ENCODE measurements at regions of chr16 and their contacts with region 1.

Region 1: DNA sequence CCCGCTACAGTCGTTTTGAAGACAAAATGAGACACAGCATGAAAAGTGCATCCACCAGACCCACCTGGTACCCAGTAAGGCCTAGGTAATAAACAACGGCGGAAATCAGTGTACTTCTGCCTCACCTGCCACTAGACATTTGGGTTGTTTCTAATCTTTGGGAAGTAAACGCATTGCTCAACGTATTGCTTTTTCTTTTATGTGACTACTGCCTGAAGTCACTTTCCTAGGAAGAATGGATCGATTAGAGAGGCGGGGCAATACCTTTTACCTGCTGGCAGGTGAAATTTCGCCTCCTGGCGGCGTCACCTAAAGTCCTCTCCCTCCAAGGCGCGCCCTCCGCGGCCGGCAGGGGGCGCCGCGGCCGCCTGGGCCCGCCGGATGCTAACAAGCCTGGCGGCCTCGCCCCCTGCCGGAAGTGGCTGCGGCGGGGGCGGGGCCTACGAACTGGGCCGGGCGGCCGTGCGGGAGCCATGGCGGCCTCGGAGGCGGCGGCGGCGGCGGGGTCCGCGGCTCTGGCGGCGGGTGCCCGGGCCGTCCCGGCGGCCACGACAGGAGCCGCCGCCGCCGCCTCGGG is at the start of gene ATMIN:
- DNase-seq: peak; percentile 92
- ATAC-seq: peak; percentile 95
- H3K4me3 ChIP-seq: peak within 1 kb of the TSS; percentile 66 to 73
- H3K27ac ChIP-seq: peak within 1 kb of the TSS; percentile 79
- H3K4me1 ChIP-seq: peaks cover 10 to 14% of the 10 kb centered on the region in 2 experiments; a peak in 3 of 4 replicates
- H3K27me3 ChIP-seq: no peaks in the 10 kb centered on the region
- CTCF ChIP-seq: peak; percentile 99 to 100 (median 100)
- POLR2A ChIP-seq: peak; percentile 54
- RAD21 ChIP-seq: peak; percentile 91
- total RNA-seq, gene ATMIN: 46.7 TPM

Region 2: DNA sequence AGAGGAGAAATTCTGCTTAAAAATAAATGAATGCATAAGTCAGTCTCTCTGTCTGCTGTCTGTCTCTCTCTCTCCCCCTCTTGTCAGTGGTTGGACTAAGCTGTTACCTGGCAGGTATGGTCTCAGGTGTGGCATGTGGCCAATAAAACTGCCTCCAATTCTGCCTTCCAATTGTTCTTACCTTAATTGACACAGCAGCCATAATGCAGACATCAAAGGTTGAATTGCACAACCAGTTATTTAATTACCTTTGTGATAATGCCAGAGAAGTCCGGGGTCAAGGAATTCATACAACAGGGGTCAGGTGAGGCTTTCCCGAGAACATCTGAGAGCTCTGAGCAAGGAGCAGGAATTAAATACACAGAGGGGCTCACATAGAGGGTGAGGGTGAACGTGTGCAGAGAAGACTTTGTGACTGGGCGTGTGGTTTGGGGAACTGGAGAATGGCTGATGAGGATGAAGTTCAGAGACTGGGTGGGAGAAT is 152.3 kb before region 1 on chr16:
- CTCF ChIA-PET with region 1: no interaction called
- POLR2A ChIA-PET with region 1: no interaction called
- RAD21 ChIA-PET with region 1: no interaction called
- intact Hi-C with region 1: no loop called
- DNase-seq: no peak
- ATAC-seq: no peak
- H3K4me3 ChIP-seq: no peak overlapping the region
- H3K27ac ChIP-seq: no peak overlapping the region
- H3K4me1 ChIP-seq: no peaks in the 10 kb centered on the region
- H3K27me3 ChIP-seq: peaks cover 18% of the 10 kb centered on the region
- CTCF ChIP-seq: no peak
- POLR2A ChIP-seq: no peak
- RAD21 ChIP-seq: no peak

Region 3: DNA sequence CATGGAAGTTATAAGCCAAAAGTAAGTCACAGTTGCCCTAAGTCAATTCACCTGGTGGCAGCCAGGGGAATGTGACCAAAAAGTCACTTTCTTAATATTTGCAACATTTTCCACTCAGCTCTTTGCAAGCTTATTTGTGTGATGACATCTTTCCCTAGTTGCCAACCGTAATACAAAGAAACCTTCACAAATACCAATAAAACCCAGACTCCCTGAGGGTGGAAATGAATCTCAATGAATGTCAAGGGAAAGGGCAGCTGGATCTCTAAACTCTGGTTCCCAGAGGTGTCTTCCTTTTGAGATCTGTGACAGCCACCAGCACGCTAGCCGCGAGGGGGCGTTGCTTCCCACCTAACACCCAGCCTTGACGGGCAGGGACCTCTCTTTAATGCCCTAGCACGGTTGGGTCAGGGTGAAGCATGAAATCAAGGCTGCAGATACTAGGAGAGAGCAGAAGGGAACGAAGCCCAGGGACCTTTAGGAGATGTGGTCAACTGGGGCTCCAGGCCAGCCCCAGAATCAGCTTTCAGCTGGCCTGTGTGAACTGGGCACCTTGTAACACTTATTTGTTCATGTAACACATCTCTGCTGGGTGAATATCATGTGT is 111.0 kb before region 1 on chr16:
- CTCF ChIA-PET with region 1: interaction called, 12 read pairs
- POLR2A ChIA-PET with region 1: no interaction called
- RAD21 ChIA-PET with region 1: no interaction called
- intact Hi-C with region 1: loop called (anchors 1 kb)
- DNase-seq: peak; percentile 58
- ATAC-seq: peak; percentile 98
- H3K4me3 ChIP-seq: no peak overlapping the region
- H3K27ac ChIP-seq: no peak overlapping the region
- H3K4me1 ChIP-seq: no peaks in the 10 kb centered on the region
- H3K27me3 ChIP-seq: peaks cover 6% of the 10 kb centered on the region; the same call in 1 of the 2 replicates
- CTCF ChIP-seq: peak; percentile 96 to 97 (median 97)
- POLR2A ChIP-seq: no peak
- RAD21 ChIP-seq: peak; percentile 87

Region 4: DNA sequence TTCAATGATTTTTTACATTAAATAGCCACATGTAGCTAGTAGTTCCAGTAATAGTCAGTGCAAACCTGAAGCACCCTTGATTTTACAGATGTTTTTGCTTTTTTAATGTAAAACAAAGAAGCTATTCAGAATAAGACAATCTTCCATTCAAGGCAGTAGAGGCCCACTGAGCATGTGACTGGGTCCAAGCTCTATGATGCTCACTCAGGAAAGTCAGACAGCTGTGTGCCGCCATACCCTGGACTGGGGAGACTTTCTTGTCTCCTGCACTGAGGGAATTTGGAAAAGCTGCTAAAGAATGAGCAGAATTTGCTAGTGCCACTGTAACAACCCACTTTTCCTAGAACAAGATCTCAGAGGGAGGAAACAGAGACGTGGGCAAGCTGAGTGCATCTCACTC is 17.0 kb before region 1 on chr16:
- CTCF ChIA-PET with region 1: interaction called, 26 read pairs
- POLR2A ChIA-PET with region 1: no interaction called
- RAD21 ChIA-PET with region 1: no interaction called
- intact Hi-C with region 1: no loop called
- DNase-seq: no peak
- ATAC-seq: no peak
- H3K4me3 ChIP-seq: no peak overlapping the region
- H3K27ac ChIP-seq: no peak overlapping the region
- H3K4me1 ChIP-seq: no peaks in the 10 kb centered on the region
- H3K27me3 ChIP-seq: no peaks in the 10 kb centered on the region
- CTCF ChIP-seq: no peak
- POLR2A ChIP-seq: no peak
- RAD21 ChIP-seq: no peak

Region 5: GRCh38 chr16:81077076-81077940 is 41.8 kb after region 1 on chr16 and contains the start of gene C16orf46:
- CTCF ChIA-PET with region 1: interaction called, 18 read pairs
- POLR2A ChIA-PET with region 1: no interaction called
- RAD21 ChIA-PET with region 1: no interaction called
- intact Hi-C with region 1: loop called (anchors 5 kb)
- DNase-seq: peak; percentile 96
- ATAC-seq: peak; percentile 92
- H3K4me3 ChIP-seq: peak within 1 kb of the TSS; percentile 66 to 74
- H3K27ac ChIP-seq: peak within 1 kb of the TSS; percentile 53
- H3K4me1 ChIP-seq: peaks cover 10 to 15% of the 10 kb centered on the region in 2 experiments
- H3K27me3 ChIP-seq: no peaks in the 10 kb centered on the region
- CTCF ChIP-seq: no peak
- POLR2A ChIP-seq: peak; percentile 80
- RAD21 ChIP-seq: no peak
- total RNA-seq, gene C16orf46: 1.7 TPM

Region 6: GRCh38 chr16:81198635-81199034 is 163.1 kb after region 1 on chr16:
- CTCF ChIA-PET with region 1: interaction called, 7 read pairs
- POLR2A ChIA-PET with region 1: no interaction called
- RAD21 ChIA-PET with region 1: no interaction called
- intact Hi-C with region 1: loop called (anchors 5 kb)
- DNase-seq: no peak
- ATAC-seq: peak; percentile 84
- H3K4me3 ChIP-seq: no peak overlapping the region
- H3K27ac ChIP-seq: no peak overlapping the region
- H3K4me1 ChIP-seq: peaks cover 0 to 5% of the 10 kb centered on the region in 2 experiments; a peak in 1 of 4 replicates
- H3K27me3 ChIP-seq: no peaks in the 10 kb centered on the region
- CTCF ChIP-seq: peak; percentile 22 to 89 (median 37); a peak in 5 of 6 replicates
- POLR2A ChIP-seq: no peak
- RAD21 ChIP-seq: peak; percentile 90

Measured in HCT116 (cell line).